CD14-positive monocyte (primary cell): ENCODE measurements at regions of chr6 and their contacts with region 1.

Region 1: DNA sequence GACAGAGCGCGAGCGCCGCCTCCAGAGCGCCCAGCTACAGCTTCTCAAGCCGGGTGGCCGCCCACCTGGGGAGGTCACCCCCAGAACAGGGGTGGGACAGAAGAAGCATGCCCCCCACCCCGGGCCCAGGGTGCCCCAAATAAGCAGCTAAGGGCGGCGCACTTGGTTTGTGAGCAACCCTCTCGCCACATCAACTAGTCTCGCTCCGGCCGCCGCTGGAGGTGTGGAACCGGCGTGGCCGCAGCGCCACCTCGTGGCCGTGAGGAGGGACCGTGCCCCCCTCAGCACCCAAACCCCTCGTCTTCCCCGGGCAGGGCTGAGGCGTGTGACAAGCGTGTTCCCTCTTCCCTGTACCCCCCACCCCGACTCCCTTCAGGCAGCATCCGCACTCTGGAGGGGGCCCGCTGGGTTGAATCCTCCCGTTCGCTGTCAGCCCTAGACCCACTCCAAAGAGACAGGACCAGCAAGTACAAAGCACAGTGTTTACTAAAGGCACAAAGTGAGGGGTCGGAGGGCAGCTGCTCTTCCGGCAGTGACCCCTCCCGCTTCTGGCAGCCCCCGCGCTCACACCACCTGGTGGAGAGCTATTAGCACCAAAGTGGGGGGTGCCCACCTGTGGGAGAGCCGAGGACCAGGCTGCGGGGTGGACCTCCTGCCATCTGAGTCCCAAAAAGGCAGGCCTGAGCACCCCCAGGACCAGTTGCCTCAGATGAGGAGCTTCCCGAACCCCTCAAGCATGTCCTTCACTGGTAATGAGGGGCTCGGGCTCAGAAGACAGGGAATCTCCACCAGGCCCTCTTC is 45.4 kb downstream of the MDFI start:
- DNase-seq: peak; percentile 59 to 73 (median 61)
- H3K4me3 ChIP-seq: peak overlapping the region; percentile 40 to 77 (median 56)
- H3K4me3 Mint-ChIP-seq: peak overlapping the region; percentile 83 to 88
- H3K27ac ChIP-seq: no peak overlapping the region
- H3K27ac Mint-ChIP-seq: peak overlapping the region in 3 of 7 donors; percentile 54 to 77 (median 63)
- H3K4me1 ChIP-seq: peaks cover 22 to 23% of the 10 kb centered on the region in 2 donors
- H3K4me1 Mint-ChIP-seq: peaks cover 18% of the 10 kb centered on the region
- H3K27me3 ChIP-seq: no peaks in the 10 kb centered on the region
- H3K27me3 Mint-ChIP-seq: peaks cover 1 to 8% (median 3%) of the 10 kb centered on the region in 3 donors
- CTCF ChIP-seq: peak; percentile 96

Region 2: DNA sequence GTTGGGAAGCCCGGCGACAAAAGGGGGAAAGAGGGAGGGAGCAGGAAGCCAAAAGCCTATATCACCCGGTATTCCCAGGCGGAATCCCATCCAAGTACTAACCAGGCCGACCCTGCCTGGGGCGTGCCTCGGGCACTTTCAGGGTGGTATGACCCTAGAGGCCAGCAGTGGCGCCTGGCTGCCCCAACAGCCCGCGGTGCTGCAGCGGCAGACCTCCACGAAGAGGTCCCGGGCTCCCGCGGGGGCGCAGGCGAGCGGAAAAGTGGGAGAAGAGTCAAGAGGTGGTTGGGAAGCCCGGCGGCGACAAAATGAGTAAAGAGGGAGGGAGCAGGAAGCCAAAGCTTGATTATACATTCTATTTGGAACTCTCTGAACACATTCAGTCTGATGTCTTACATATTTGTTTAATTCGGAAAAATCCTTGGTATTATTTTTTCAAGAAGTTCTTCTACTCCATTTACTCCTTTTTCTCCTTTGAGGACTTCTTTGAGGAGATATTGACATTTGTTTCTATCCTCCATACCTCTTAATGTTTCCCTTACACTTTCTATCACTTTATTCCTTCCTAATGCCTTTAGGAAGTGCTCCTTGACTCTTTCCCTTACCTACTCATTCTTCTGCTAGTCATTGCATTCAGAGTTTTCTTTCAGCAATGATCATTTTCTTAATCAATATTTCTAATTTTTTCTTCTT is 444.1 kb before region 1 on chr6:
- intact Hi-C with region 1: no loop called
- DNase-seq: no peak
- H3K4me3 ChIP-seq: no peak overlapping the region
- H3K4me3 Mint-ChIP-seq: peak overlapping the region in 1 of 2 donors; percentile 67
- H3K27ac ChIP-seq: no peak overlapping the region
- H3K27ac Mint-ChIP-seq: no peak overlapping the region
- H3K4me1 ChIP-seq: no peaks in the 10 kb centered on the region
- H3K4me1 Mint-ChIP-seq: peaks cover 4% of the 10 kb centered on the region
- H3K27me3 ChIP-seq: peaks cover 16 to 21% of the 10 kb centered on the region in 2 donors
- H3K27me3 Mint-ChIP-seq: peaks cover 26 to 36% (median 31%) of the 10 kb centered on the region in 3 donors
- CTCF ChIP-seq: no peak

Region 3: DNA sequence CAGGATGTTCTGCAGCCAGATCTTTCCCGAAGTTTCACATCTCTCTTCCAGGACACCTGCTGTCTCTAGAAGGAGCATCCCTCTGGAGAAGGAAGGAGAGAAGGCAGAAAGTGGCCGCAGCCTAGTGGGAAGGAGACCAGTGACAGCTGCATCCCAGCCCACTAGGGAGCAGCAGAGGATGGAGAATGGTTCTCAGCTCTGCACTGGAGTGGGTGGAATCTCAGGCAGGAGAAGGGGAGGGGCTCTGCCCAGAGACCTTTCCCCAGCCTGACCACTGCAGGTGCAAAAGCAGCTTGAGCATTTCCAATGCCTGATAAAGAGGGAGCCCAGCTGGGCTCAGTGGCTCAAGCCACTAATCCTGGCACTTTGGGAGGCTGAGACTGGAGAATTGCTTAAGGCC is 316.0 kb before region 1 on chr6:
- intact Hi-C with region 1: loop called in 1 of 2 experiments (anchors 2 kb)
- DNase-seq: no peak
- H3K4me3 ChIP-seq: no peak overlapping the region
- H3K4me3 Mint-ChIP-seq: peak overlapping the region in 1 of 2 donors; percentile 15
- H3K27ac ChIP-seq: no peak overlapping the region
- H3K27ac Mint-ChIP-seq: peak overlapping the region in 1 of 7 donors; percentile 46
- H3K4me1 ChIP-seq: peaks cover 13 to 19% of the 10 kb centered on the region in 2 donors
- H3K4me1 Mint-ChIP-seq: peaks cover 20% of the 10 kb centered on the region
- H3K27me3 ChIP-seq: peaks cover 42 to 73% of the 10 kb centered on the region in 2 donors
- H3K27me3 Mint-ChIP-seq: peaks cover 53 to 76% (median 69%) of the 10 kb centered on the region in 3 donors
- CTCF ChIP-seq: no peak